Activated T-helper 2 cell treated with anti-CD3 and anti-CD28 coated beads, Interferon-gamma antibody, Interleukin-2, Interleukin-4, amounts not matched to agents 10 μg/mL and 5 μg/mL and 100 μg/mL, durations not matched to agents 14 hours and 24 hours and 36 hours (primary cell): ENCODE measurements at regions of chr18 and their contacts with region 1.

Region 1: GRCh38 chr18:47263430-47264307 is 12.2 kb upstream of the SKOR2 start:
- DNase-seq: no peak
- H3K4me3 Mint-ChIP-seq: no peak overlapping the region
- H3K27ac Mint-ChIP-seq: no peak overlapping the region
- H3K4me1 Mint-ChIP-seq: no peaks in the 10 kb centered on the region
- H3K27me3 Mint-ChIP-seq: peaks cover 55% of the 10 kb centered on the region

Region 2: DNA sequence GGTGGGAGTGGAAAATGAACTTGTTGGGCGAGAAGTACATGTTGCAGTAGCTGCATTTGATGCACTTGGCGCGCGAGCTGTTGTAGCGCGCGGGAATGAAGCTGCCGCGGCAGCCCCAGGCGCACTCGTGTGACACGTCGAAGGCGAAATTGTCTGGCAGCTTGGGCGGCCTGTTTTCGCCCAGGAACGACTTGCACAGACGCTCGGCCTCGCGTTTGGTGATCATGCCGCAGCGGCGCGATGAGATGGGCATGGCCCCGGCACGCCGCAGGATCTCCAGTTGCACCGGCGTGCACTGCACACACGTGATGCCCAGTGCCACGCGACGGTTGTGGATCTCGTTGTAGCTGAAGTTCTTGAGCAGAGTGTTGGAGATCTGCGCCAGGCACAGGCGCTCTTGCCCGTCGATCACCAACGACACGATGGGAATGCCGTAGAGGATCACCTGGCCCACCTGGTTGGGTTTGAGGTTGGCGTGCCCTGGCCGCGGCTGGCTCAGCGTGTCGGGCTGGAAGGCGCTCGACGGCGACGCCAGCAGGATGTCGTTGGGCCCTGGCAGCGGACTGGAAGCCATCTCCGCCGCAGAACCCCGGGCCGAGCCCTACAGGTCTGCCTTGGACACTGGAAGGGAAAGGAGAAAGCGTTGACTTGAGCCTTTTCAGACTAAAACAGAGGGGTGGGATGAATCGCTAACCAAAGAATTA is 14.9 kb before region 1 on chr18:
- intact Hi-C with region 1: loop called (anchors 2 kb)
- DNase-seq: no peak
- H3K4me3 Mint-ChIP-seq: no peak overlapping the region
- H3K27ac Mint-ChIP-seq: peak overlapping the region; percentile 28
- H3K4me1 Mint-ChIP-seq: no peaks in the 10 kb centered on the region
- H3K27me3 Mint-ChIP-seq: peaks cover 76% of the 10 kb centered on the region

Region 3: GRCh38 chr18:47283476-47283875 is 19.8 kb after region 1 on chr18:
- intact Hi-C with region 1: no loop called
- DNase-seq: no peak
- H3K4me3 Mint-ChIP-seq: no peak overlapping the region
- H3K27ac Mint-ChIP-seq: no peak overlapping the region
- H3K4me1 Mint-ChIP-seq: no peaks in the 10 kb centered on the region
- H3K27me3 Mint-ChIP-seq: peaks cover 2% of the 10 kb centered on the region